ENCODE measurements at regions of chr1 and their contacts with region 1.

Region 1: GRCh38 chr1:56837244-56837939 is 17.2 kb upstream of the C8A start:
- DNase-seq: no peak
- ATAC-seq: no peak
- H3K4me3 ChIP-seq: no peak overlapping the region
- H3K27ac ChIP-seq: no peak overlapping the region
- H3K4me1 ChIP-seq: no peaks in the 10 kb centered on the region
- H3K27me3 ChIP-seq: no peaks in the 10 kb centered on the region; a peak in 1 of 4 replicates
- CTCF ChIP-seq: no peak
- EP300 ChIP-seq: no peak
- POLR2A ChIP-seq: no peak
- RAD21 ChIP-seq: no peak

Region 2: DNA sequence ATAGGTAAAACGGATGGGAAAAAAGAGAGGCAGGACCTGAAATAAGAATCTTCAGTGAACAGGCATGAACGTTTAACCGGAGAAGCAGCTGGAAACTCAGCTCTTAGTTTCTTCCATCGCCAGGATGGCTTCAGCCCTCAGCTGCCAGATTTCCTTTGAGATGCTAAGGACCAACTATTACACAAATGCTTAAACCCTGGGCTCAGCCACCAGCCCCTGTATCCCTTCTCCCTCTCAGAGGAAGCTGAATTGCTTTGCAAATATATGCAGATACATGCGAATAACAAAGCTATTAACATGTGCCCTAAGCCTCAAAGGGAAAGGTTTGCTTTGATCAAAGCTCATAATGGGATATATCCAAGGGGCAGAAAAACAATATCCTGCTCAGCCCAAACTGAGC is 1194.0 kb after region 1 on chr1:
- CTCF ChIA-PET with region 1: no interaction called
- POLR2A ChIA-PET with region 1: no interaction called
- RAD21 ChIA-PET with region 1: no interaction called
- SMC1A ChIA-PET with region 1: no interaction called
- in situ Hi-C with region 1: no loop called
- intact Hi-C with region 1: loop called (anchors 5 kb)
- DNase-seq: no peak
- ATAC-seq: no peak
- H3K4me3 ChIP-seq: no peak overlapping the region
- H3K27ac ChIP-seq: no peak overlapping the region
- H3K4me1 ChIP-seq: no peaks in the 10 kb centered on the region
- H3K27me3 ChIP-seq: peaks cover 0 to 4% of the 10 kb centered on the region in 2 experiments; a peak in 1 of 4 replicates
- CTCF ChIP-seq: no peak
- EP300 ChIP-seq: no peak
- POLR2A ChIP-seq: no peak
- RAD21 ChIP-seq: no peak